Heart left ventricle (tissue), 16 donors: ENCODE measurements at regions of chr1 and their contacts with region 1.

Region 1: DNA sequence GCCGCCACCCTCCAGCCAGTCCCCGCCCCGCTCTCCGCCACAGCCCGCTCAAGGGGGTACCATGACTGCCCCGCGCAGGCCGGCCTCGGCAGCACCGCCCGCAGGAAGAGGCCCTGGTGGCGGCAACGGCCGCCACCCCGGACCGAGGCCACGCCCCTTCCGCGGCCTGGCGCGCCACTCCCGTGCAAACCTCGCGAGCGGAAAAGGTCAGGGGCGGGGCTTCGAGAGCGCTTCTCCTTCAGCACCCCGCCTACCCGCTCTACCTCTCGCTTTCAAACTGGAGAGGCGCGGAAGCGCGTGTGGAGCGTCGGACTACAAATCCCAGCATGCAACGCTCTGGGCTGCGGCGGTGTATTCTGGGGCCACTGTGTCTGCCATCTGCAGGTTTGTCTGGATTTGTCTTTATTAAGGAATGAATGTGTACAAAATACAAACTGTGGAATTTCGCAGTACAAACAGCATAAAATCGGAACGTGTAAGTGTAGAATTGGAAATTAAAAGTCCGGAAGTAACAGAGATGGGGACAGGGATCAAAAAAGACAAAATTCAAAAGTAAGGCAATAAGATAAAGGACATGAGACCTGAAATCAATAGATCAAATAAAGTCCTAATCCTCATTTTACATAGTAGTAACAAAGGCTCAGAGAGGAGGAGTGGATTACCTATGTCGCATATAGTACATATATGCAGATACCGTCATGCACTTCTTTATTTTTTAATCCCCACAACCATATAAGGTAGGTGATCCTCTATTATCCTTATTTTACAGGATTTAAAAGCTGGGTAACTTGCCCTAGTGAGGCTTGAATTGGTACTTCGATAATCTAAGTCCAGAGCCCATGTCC is 464 bp upstream of the ADSS2 start:
- DNase-seq: peak; percentile 99 to 100 (median 100)
- ATAC-seq: peak; percentile 97 to 99 (median 98)
- H3K4me3 ChIP-seq: peak overlapping the region; percentile 72 to 96 (median 92)
- H3K27ac ChIP-seq: peak overlapping the region; percentile 63 to 97 (median 94)
- H3K4me1 ChIP-seq: peaks cover 0 to 42% (median 12%) of the 10 kb centered on the region in 12 donors
- H3K27me3 ChIP-seq: no peaks in the 10 kb centered on the region
- CTCF ChIP-seq: peak in 9 of 12 donors; percentile 29 to 62 (median 44)
- POLR2A ChIP-seq: no peak

Region 2: GRCh38 chr1:243255791-243256512 is 1196.2 kb before region 1 on chr1 and contains the start of gene SDCCAG8:
- intact Hi-C with region 1: loop called in 2 of 10 experiments (anchors 5 to 10 kb)
- DNase-seq: peak; percentile 96 to 99 (median 99)
- ATAC-seq: peak; percentile 93 to 96 (median 96)
- H3K4me3 ChIP-seq: peak within 1 kb of the TSS; percentile 72 to 100 (median 84)
- H3K27ac ChIP-seq: peak within 1 kb of the TSS; percentile 93 to 98 (median 96)
- H3K4me1 ChIP-seq: peaks cover 0 to 66% (median 34%) of the 10 kb centered on the region in 12 donors
- H3K27me3 ChIP-seq: no peaks in the 10 kb centered on the region
- CTCF ChIP-seq: no peak
- POLR2A ChIP-seq: peak in 1 of 2 donors; percentile 87
- total RNA-seq, gene SDCCAG8: 16.7 to 36.6 (median 23.6) TPM

Region 3: DNA sequence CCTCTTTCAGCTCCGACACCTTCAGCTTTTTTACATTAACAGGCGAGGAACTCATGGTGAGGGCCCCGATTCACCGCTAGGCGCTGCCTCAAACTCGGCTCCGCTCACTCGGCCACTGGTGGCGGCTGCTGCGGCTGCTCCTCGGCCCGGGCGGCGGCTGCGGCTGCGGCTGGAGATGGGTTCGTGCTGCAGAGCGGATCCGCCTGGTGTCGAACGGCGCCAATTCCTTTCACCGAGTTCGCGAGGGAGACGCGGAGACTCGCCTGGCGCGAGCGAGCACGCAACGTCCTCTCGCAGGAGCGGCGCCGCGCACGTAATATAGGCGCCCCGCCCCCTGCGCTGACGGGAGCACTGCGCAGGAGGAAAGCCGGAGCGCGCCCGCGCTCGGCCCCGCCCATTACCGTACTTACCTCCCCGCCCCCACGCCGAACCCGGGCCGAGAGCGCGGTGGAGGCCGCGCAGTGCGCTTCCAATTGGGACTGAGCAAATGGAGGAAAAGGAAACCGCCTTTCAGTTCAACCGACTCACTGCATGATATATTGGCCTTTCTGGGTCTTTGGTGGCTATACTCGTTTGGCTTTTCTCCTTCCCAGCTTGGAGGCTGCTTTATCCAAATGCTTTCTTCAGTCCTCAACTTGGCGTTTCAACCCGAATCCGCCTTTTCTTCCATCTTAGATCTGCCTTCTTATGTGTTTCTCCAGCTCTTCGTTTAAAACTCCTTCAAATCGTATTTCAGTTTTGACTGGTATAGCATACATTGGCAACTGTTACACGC is 412.3 kb after region 1 on chr1 and contains the start of gene HNRNPU:
- intact Hi-C with region 1: loop called in 2 of 10 experiments (anchors 5 to 10 kb)
- DNase-seq: peak; percentile 97 to 99 (median 98)
- ATAC-seq: peak; percentile 89 to 96 (median 93)
- H3K4me3 ChIP-seq: peak within 1 kb of the TSS; percentile 88 to 100 (median 96)
- H3K27ac ChIP-seq: peak within 1 kb of the TSS; percentile 94 to 100 (median 100)
- H3K4me1 ChIP-seq: peaks cover 5 to 47% (median 40%) of the 10 kb centered on the region in 12 donors
- H3K27me3 ChIP-seq: no peaks in the 10 kb centered on the region
- CTCF ChIP-seq: peak in 7 of 12 donors; percentile 5 to 38 (median 32)
- POLR2A ChIP-seq: peak; percentile 75 to 97
- total RNA-seq, gene HNRNPU: 138 to 218 (median 169) TPM

Region 4: GRCh38 chr1:244970661-244971551 is 518.7 kb after region 1 on chr1:
- intact Hi-C with region 1: loop called in 2 of 10 experiments (anchors 5 to 10 kb)
- DNase-seq: peak; percentile 93 to 97 (median 95)
- ATAC-seq: peak; percentile 80 to 93 (median 90)
- H3K4me3 ChIP-seq: peak overlapping the region; percentile 68 to 95 (median 76)
- H3K27ac ChIP-seq: peak overlapping the region; percentile 97 to 100 (median 99)
- H3K4me1 ChIP-seq: peaks cover 0 to 24% (median 17%) of the 10 kb centered on the region in 12 donors
- H3K27me3 ChIP-seq: no peaks in the 10 kb centered on the region
- CTCF ChIP-seq: peak; percentile 43 to 83 (median 58)
- POLR2A ChIP-seq: peak in 1 of 2 donors; percentile 58